ENCODE measurements at regions of chr17 and their contacts with region 1.

Region 1: DNA sequence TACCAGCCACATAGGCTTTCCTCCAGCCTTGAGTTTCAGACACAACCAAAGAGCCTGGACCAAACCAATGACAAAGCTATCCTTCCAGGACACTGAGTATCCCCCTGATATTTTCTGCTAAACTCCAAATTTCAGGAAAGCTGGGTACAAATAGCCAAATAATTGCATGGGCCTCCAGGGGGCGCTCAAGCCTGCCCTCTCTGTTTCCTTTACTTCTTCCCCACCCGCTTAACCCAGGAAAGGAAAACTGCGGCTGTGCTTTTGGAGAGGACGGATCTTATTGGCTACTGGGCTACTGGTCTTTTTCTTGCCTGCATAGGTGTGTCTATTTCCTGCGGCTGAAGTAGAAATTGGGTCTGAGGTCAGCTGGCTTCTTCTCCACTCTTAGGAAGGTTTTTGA is 30.1 kb downstream of the GNGT2 start:
- DNase-seq: peak; percentile 75 to 88
- ATAC-seq: no peak
- H3K4me3 ChIP-seq: no peak overlapping the region
- H3K27ac ChIP-seq: no peak overlapping the region
- H3K4me1 ChIP-seq: no peaks in the 10 kb centered on the region
- H3K27me3 ChIP-seq: peaks cover 0 to 1% of the 10 kb centered on the region in 2 donors

Region 2: GRCh38 chr17:49125449-49125848 is 54.9 kb before region 1 on chr17:
- intact Hi-C with region 1: loop called in 1 of 2 experiments (anchors 10 kb)
- DNase-seq: no peak
- ATAC-seq: no peak
- H3K4me3 ChIP-seq: no peak overlapping the region
- H3K27ac ChIP-seq: no peak overlapping the region
- H3K4me1 ChIP-seq: no peaks in the 10 kb centered on the region
- H3K27me3 ChIP-seq: peaks cover 0 to 4% of the 10 kb centered on the region in 2 donors

Region 3: DNA sequence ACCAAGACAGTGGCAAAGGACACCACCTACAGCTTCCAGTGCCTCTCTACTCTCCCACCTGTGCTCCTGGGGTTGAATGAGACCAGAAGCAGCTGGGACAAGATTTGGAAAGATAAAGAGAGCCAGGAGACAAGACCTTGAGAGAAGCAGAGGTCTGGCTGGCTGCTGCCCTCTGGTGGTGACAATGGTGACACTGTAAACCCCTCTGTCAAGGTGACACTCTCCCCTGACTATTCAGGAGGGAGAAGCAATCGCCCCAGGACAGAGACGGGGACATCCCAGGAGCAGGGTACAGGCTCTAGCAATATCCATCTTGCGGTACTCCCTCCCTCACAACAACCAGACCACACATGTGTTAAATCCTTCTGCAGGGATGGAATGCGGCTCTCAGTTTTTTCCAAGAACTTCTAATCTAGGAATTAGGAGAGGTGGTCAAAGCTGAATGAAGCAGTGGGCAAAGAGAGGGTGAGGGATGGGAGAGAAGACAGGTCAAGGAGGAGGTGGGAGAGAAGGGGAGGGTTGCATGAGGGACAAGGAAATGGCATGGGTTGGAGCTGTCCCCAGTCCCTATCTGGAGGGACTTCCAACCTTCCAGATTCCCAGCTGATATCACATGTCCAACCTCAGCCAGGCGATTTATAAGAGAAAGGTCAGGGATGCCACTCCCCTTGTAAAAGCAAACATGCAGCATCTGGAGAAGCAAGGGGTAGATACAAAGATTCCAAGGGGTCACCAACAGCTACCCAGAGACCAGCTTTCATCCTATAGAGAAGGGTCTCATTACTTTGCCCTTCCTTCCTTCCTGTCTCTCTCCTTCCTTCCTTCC is 47.3 kb after region 1 on chr17:
- intact Hi-C with region 1: loop called (anchors 1 to 5 kb)
- DNase-seq: peak; percentile 84 to 90
- ATAC-seq: no peak
- H3K4me3 ChIP-seq: no peak overlapping the region
- H3K27ac ChIP-seq: no peak overlapping the region
- H3K4me1 ChIP-seq: no peaks in the 10 kb centered on the region
- H3K27me3 ChIP-seq: no peaks in the 10 kb centered on the region

Measured in aorta (tissue), 5 donors.